PC-9 (cell line): ENCODE measurements at regions of chr9 and their contacts with region 1.

Region 1: DNA sequence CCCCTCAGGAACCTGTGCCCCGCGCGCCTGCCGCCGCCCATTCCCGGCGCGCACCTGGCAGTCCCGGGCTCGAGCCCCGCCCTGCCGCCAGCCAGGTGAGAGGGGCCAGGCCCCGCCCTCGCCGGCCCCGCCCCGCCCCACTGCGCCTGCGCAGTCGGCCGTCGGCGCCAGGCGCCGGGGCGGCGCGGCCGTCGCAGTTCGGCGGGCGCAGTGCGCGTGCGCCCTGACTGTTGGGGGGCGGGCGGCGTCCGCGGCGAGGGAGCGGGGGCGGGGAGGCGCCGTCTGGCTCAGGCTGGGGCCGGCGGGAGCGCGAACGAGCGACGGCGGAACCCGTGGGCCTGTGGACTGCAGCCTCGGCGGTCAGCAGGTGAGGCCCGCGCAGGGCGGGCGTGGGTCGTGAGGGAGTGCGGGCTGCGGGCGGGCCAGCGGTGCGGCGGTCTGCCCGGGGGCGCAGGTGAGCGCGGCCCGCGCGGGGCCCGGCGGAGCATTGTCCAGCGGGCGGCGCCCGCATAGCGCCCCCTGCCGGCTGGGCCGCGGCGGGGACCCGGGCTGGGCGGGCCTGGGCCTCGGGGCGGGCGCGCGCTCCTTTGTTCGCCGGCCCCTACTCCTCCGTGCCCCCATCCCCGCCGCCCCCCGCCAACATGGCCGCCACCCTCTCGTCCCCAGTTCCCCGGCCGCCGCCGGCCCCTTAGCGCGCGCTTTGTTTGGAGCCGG is at the start of gene SPIN1:
- DNase-seq: peak in 1 of 2 experiments; percentile 95
- H3K4me3 ChIP-seq: peak within 1 kb of the TSS; percentile 99
- H3K27ac ChIP-seq: peak within 1 kb of the TSS; percentile 76
- H3K4me1 ChIP-seq: peaks cover 29% of the 10 kb centered on the region
- H3K27me3 ChIP-seq: no peaks in the 10 kb centered on the region
- CTCF ChIP-seq: no peak
- total RNA-seq, gene SPIN1: 102 and 112 TPM in 2 replicates

Region 2: GRCh38 chr9:88106491-88106890 is 281.8 kb before region 1 on chr9:
- CTCF ChIA-PET with region 1: no interaction called
- POLR2A ChIA-PET with region 1: no interaction called
- intact Hi-C with region 1: loop called (anchors 5 kb)
- DNase-seq: peak; percentile 34 to 57
- H3K4me3 ChIP-seq: no peak overlapping the region
- H3K27ac ChIP-seq: no peak overlapping the region
- H3K4me1 ChIP-seq: no peaks in the 10 kb centered on the region
- H3K27me3 ChIP-seq: no peaks in the 10 kb centered on the region
- CTCF ChIP-seq: peak; percentile 71

Region 3: GRCh38 chr9:88197781-88198340 is 190.5 kb before region 1 on chr9:
- CTCF ChIA-PET with region 1: no interaction called
- POLR2A ChIA-PET with region 1: no interaction called
- intact Hi-C with region 1: loop called (anchors 1 kb)
- DNase-seq: peak; percentile 46 to 98
- H3K4me3 ChIP-seq: peak overlapping the region; percentile 43; the same call in 1 of the 2 replicates
- H3K27ac ChIP-seq: peak overlapping the region; percentile 96
- H3K4me1 ChIP-seq: peaks cover 47% of the 10 kb centered on the region
- H3K27me3 ChIP-seq: no peaks in the 10 kb centered on the region
- CTCF ChIP-seq: no peak

Region 4: DNA sequence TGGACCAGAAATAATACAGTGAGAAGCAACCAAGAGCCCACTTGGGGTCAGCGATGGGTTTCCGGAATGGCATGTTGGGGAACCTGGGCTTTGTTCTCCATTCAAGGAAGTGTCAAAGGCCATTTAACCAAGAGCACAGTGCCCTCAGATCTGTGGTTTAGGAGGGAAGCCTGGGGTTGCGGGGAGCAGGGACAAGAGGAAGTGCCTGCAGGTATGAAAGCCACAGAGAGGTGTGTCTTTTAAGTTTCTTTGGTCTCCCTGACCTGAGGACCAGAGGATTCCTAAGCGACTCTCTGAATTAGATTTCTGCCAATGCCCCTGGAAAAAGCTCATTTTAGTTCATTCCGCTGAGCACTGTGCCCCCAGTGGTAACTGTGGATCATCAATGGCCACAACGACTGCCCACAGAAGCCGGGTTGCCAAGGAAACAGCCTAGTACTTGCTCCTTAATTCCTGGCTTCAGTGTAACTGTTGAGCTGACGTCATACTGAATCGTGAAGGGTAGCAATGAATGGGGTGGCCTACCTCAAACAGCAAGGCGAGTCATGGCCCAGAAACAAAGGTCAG is 107.4 kb before region 1 on chr9:
- CTCF ChIA-PET with region 1: no interaction called
- POLR2A ChIA-PET with region 1: interaction called, 6 read pairs
- intact Hi-C with region 1: loop called (anchors 2 kb)
- DNase-seq: peak; percentile 77 to 83
- H3K4me3 ChIP-seq: peak overlapping the region; percentile 14; the same call in 1 of the 2 replicates
- H3K27ac ChIP-seq: peak overlapping the region; percentile 60
- H3K4me1 ChIP-seq: peaks cover 30% of the 10 kb centered on the region
- H3K27me3 ChIP-seq: no peaks in the 10 kb centered on the region
- CTCF ChIP-seq: 0 out of 2 replicates have a peak, but pooled peaks have one; percentile 26

Region 5: DNA sequence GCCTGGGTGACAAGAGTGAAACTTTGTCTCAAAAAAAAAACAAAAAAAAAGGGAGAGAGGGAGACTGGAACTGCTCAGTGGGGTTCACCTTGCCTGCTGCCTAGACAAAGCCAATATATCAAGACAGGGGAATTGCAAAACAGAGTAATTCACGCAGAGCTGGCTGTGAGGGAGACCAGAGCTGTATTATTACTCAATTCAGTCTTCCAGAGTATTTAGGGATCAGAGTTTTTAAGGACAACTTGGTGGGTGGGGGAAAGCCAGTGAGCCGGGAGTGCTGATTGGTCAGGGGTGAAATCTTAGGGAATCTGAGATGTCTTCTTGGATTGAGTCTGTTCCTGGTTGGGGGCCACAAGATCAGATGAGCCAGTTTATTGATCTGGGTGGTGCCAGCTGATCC is 25.6 kb before region 1 on chr9:
- CTCF ChIA-PET with region 1: no interaction called
- POLR2A ChIA-PET with region 1: no interaction called
- intact Hi-C with region 1: no loop called
- DNase-seq: no peak
- H3K4me3 ChIP-seq: no peak overlapping the region
- H3K27ac ChIP-seq: no peak overlapping the region
- H3K4me1 ChIP-seq: peaks cover 6% of the 10 kb centered on the region; the same call in 1 of the 2 replicates
- H3K27me3 ChIP-seq: no peaks in the 10 kb centered on the region
- CTCF ChIP-seq: no peak

Region 6: DNA sequence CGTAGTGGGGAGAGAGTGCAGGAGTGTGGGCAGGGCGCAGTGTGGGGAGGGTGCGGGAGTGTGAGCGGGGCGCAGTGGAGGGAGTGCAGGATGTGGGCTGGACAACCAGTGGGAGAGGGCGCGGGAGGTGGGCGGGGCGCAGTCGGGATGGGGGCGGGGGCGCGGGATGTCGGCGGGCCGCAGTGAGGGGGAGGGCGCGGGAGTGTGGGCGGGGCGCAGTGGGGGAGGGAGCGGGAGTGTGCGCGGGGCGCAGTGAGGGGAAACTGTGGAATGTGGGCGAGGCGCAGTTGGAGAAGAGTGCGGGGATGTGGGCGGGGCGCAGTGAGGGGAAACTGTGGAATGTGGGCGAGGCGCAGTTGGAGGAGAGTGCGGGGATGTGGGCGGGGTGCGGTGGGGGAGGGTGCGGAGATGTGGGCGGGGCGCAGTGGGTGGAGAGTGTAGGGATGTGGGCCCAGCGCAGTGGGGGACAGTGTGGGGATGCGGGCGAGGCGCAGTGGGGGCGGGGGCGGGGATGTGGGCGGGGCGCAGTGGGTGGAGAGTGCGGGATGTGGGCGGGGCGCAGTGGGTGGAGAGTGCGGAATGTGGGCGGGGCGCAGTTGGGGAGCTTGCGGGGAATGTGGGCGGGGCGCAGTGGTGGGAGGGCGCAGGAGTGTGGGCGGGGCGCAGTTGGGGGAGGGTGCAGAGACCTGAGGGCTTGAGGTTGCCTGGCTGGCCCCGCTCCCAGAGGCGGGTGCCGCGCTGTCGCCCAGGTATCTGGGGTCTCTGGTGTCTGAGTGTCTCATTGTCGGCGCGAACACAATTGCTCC is 146.3 kb after region 1 on chr9 and contains the start of gene NXNL2:
- CTCF ChIA-PET with region 1: no interaction called
- POLR2A ChIA-PET with region 1: interaction called, 3 read pairs
- intact Hi-C with region 1: loop called (anchors 1 kb)
- DNase-seq: peak; percentile 55 to 90
- H3K4me3 ChIP-seq: peak within 1 kb of the TSS; percentile 67
- H3K27ac ChIP-seq: peak within 1 kb of the TSS; percentile 65
- H3K4me1 ChIP-seq: peaks cover 33% of the 10 kb centered on the region
- H3K27me3 ChIP-seq: no peaks in the 10 kb centered on the region
- CTCF ChIP-seq: no peak
- total RNA-seq, gene NXNL2: 5.5 and 8.7 TPM in 2 replicates

Region 7: GRCh38 chr9:89178162-89179010 is 790.1 kb after region 1 on chr9 and contains the start of gene SHC3:
- CTCF ChIA-PET with region 1: no interaction called
- POLR2A ChIA-PET with region 1: no interaction called
- intact Hi-C with region 1: no loop called
- DNase-seq: peak in 1 of 2 experiments; percentile 37
- H3K4me3 ChIP-seq: peak within 1 kb of the TSS; percentile 62
- H3K27ac ChIP-seq: peak within 1 kb of the TSS; percentile 78
- H3K4me1 ChIP-seq: peaks cover 34% of the 10 kb centered on the region
- H3K27me3 ChIP-seq: no peaks in the 10 kb centered on the region
- CTCF ChIP-seq: no peak
- total RNA-seq, gene SHC3: 12.9 and 15.9 TPM in 2 replicates